ENCODE measurements at regions of chr9 and their contacts with region 1.

Region 1: GRCh38 chr9:69672596-69673310 is 582 bp upstream of the APBA1 start:
- DNase-seq: peak; percentile 80
- ATAC-seq: peak; percentile 91
- H3K4me3 ChIP-seq: peak overlapping the region; percentile 69
- H3K27ac ChIP-seq: no peak overlapping the region
- H3K4me1 ChIP-seq: peaks cover 20% of the 10 kb centered on the region
- H3K27me3 ChIP-seq: peaks cover 13% of the 10 kb centered on the region; the same call in 1 of the 2 replicates
- CTCF ChIP-seq: peak; percentile 67

Region 2: DNA sequence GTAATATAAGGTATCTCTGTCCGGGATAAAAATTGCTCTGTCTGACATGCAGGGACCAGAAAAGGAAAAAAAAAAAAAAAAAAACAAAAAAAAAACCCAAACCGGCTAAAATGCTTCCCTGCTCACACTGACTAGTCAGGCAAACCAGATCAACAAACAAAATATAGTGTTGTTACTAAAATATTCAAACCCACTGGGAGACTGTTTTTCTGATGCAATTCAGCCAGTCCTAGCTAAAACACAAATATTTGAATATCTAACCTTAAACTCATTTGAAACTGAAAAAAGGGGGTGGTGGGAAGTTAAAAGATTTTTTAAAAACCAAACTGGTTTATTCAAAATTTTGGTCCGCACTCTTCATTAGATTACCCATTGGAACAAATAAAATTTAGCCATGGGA is 61.5 kb before region 1 on chr9:
- CTCF ChIA-PET with region 1: no interaction called
- POLR2A ChIA-PET with region 1: no interaction called
- intact Hi-C with region 1: no loop called
- DNase-seq: no peak
- ATAC-seq: no peak
- H3K4me3 ChIP-seq: no peak overlapping the region
- H3K27ac ChIP-seq: no peak overlapping the region
- H3K4me1 ChIP-seq: no peaks in the 10 kb centered on the region
- H3K27me3 ChIP-seq: peaks cover 22% of the 10 kb centered on the region; the same call in 1 of the 2 replicates
- CTCF ChIP-seq: no peak

Region 3: GRCh38 chr9:69759421-69760277 is 86.9 kb after region 1 on chr9 and contains the start of gene PTAR1:
- CTCF ChIA-PET with region 1: no interaction called
- POLR2A ChIA-PET with region 1: no interaction called
- intact Hi-C with region 1: loop called (anchors 10 kb)
- DNase-seq: peak; percentile 82
- ATAC-seq: peak; percentile 82
- H3K4me3 ChIP-seq: peak within 1 kb of the TSS; percentile 99
- H3K27ac ChIP-seq: peak within 1 kb of the TSS; percentile 43; the same call in 1 of the 2 replicates
- H3K4me1 ChIP-seq: peaks cover 6% of the 10 kb centered on the region; the same call in 1 of the 2 replicates
- H3K27me3 ChIP-seq: no peaks in the 10 kb centered on the region
- CTCF ChIP-seq: no peak
- total RNA-seq, gene PTAR1: 20.0 and 22.9 TPM in 2 replicates

Region 4: DNA sequence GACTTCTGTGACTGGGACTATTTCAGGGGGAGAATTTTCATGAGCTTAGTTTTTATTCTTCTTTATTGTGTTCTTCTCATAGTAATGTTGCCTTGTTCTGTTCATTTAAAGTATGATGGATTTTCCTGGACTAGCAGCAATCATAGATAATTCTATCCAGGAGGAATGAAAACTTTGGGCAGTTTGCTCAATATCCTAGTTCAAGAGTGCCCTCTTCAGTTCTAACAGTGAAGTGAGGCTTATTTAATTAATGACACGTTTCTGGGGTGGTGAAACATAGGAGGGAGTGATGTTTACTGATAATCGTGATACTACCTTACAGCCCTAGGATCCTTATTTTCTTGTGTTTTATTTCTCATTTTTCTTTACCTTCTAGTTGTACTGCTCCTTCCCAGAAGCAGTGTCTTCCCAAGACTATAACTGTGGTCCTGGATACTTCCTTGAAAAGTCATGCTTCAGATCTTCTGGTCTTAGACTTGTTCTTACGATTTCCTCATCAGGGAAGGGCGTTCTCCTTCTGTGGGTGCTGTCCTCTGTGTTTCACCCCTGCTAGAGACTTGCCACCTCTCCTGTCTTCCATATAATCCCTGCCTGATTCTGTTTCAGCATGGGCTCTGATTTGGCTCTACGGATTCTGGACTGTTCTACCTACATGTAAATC is 205.2 kb after region 1 on chr9:
- CTCF ChIA-PET with region 1: no interaction called
- POLR2A ChIA-PET with region 1: no interaction called
- intact Hi-C with region 1: loop called (anchors 10 kb)
- DNase-seq: peak; percentile 58
- ATAC-seq: peak; percentile 63
- H3K4me3 ChIP-seq: no peak overlapping the region
- H3K27ac ChIP-seq: no peak overlapping the region
- H3K4me1 ChIP-seq: no peaks in the 10 kb centered on the region
- H3K27me3 ChIP-seq: no peaks in the 10 kb centered on the region
- CTCF ChIP-seq: peak; percentile 71

Region 5: GRCh38 chr9:69932901-69933300 is 260.1 kb after region 1 on chr9:
- CTCF ChIA-PET with region 1: interaction called, 3 read pairs
- POLR2A ChIA-PET with region 1: no interaction called
- intact Hi-C with region 1: loop called (anchors 10 kb)
- DNase-seq: peak; percentile 54
- ATAC-seq: peak; percentile 48
- H3K4me3 ChIP-seq: no peak overlapping the region
- H3K27ac ChIP-seq: no peak overlapping the region
- H3K4me1 ChIP-seq: peaks cover 14% of the 10 kb centered on the region
- H3K27me3 ChIP-seq: no peaks in the 10 kb centered on the region
- CTCF ChIP-seq: peak; percentile 51

Region 6: GRCh38 chr9:70060883-70061507 is 388.2 kb after region 1 on chr9:
- CTCF ChIA-PET with region 1: no interaction called
- POLR2A ChIA-PET with region 1: no interaction called
- intact Hi-C with region 1: no loop called
- DNase-seq: no peak
- ATAC-seq: no peak
- H3K4me3 ChIP-seq: no peak overlapping the region
- H3K27ac ChIP-seq: no peak overlapping the region
- H3K4me1 ChIP-seq: no peaks in the 10 kb centered on the region
- H3K27me3 ChIP-seq: peaks cover 27% of the 10 kb centered on the region
- CTCF ChIP-seq: no peak

Measured in PC-3 (cell line).